Activated CD4-positive, alpha-beta memory T cell treated with anti-CD3 and anti-CD28 coated beads for 36 hours (primary cell): ENCODE measurements at regions of chr4 and their contacts with region 1.

Region 1: DNA sequence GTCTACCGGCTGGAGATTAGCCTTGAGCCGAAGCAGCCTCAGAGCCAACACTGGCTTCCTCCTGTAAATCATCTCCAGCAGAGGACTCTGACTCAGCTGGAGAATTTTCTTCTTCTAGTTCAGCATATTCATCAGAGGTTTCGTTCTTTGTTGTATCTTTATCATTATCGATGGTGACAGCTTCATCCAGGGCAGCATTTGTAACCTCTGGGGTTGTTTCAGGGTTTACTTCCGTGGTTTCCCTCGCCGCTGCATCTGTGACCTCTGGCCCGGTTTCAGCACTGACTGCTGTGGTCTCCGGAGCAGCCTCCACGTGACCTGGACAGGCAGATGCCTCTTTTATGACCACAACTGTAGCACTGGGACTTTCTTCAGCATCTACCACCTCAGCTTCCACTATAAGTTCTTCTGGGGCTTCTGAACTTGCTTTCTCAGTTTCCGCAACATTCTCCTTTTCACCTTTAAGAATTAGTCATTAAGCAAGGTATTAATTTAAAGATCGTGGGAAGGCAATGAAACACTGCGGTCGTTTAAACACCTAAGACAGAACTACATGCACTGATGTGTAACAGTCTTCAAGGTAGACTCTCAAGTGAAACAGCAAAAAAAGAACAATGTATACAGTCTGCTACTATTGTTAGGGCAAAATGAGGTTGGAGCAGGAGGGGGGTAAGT is 13.3 kb downstream of the MGARP start:
- DNase-seq: peak; percentile 94
- H3K4me3 Mint-ChIP-seq: peak overlapping the region; percentile 28
- H3K27ac Mint-ChIP-seq: peak overlapping the region; percentile 84
- H3K4me1 Mint-ChIP-seq: peaks cover 19% of the 10 kb centered on the region
- H3K27me3 Mint-ChIP-seq: peaks cover 1% of the 10 kb centered on the region

Region 2: GRCh38 chr4:139083956-139084803 is 182.5 kb before region 1 on chr4:
- CTCF ChIA-PET with region 1: no interaction called
- POLR2A ChIA-PET with region 1: interaction called, 3 read pairs
- intact Hi-C with region 1: loop called (anchors 1 kb)
- DNase-seq: peak; percentile 90
- H3K4me3 Mint-ChIP-seq: peak overlapping the region; percentile 98
- H3K27ac Mint-ChIP-seq: peak overlapping the region; percentile 99
- H3K4me1 Mint-ChIP-seq: peaks cover 36% of the 10 kb centered on the region
- H3K27me3 Mint-ChIP-seq: no peaks in the 10 kb centered on the region

Region 3: GRCh38 chr4:139243448-139244365 is 23.0 kb before region 1 on chr4:
- CTCF ChIA-PET with region 1: no interaction called
- POLR2A ChIA-PET with region 1: no interaction called
- intact Hi-C with region 1: no loop called
- DNase-seq: no peak
- H3K4me3 Mint-ChIP-seq: no peak overlapping the region
- H3K27ac Mint-ChIP-seq: no peak overlapping the region
- H3K4me1 Mint-ChIP-seq: no peaks in the 10 kb centered on the region
- H3K27me3 Mint-ChIP-seq: no peaks in the 10 kb centered on the region

Region 4: DNA sequence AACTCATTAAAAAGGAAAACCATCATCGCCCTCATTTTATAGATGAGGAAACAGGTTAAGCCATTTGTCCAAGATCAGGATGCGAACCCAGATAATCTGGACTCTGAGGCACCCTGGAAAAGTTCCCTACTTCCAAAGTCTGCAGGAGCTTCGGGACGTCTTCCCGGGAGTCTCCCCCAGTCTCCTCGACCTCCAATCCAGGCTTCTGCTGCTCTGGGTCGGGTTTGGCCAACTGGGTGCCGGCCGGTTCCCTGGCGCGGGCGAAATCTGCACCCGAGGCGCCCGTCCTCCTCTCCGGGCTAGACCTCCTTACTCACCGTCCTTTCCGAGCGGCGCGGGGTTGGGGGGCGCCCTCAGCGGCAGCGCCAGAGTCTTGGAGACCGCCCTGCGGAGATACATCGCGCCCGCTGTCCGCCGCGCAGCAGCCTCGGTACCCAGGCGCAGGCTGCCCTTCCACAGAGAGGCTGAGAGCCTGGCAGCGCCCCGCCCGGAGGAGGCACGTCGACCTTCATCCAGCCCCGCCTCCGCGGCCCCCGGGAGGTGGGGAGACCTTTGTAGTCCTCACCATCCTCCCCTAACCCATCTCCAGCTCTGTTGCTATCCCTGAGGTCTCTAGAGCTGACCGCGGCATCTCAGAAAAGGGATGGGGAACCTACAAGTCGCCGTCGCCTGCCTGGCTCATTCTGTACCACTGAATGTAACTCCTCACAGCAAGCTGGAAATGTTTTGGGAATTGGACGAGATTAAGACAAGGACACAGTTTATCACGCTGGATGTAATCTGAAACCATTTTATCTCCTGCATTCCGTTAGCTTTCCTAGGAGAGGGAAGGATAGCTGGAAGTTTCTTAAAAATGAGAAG is 13.3 kb after region 1 on chr4 and contains the start of gene MGARP:
- CTCF ChIA-PET with region 1: interaction called, 3 read pairs
- POLR2A ChIA-PET with region 1: no interaction called
- intact Hi-C with region 1: loop called (anchors 1 kb)
- DNase-seq: peak; percentile 30
- H3K4me3 Mint-ChIP-seq: peak within 1 kb of the TSS; percentile 60
- H3K27ac Mint-ChIP-seq: no peak within 1 kb of the TSS
- H3K4me1 Mint-ChIP-seq: peaks cover 13% of the 10 kb centered on the region
- H3K27me3 Mint-ChIP-seq: peaks cover 40% of the 10 kb centered on the region
- total RNA-seq, gene MGARP: 0.22 TPM in 1 of 2 experiments, not detected in the other

Region 5: DNA sequence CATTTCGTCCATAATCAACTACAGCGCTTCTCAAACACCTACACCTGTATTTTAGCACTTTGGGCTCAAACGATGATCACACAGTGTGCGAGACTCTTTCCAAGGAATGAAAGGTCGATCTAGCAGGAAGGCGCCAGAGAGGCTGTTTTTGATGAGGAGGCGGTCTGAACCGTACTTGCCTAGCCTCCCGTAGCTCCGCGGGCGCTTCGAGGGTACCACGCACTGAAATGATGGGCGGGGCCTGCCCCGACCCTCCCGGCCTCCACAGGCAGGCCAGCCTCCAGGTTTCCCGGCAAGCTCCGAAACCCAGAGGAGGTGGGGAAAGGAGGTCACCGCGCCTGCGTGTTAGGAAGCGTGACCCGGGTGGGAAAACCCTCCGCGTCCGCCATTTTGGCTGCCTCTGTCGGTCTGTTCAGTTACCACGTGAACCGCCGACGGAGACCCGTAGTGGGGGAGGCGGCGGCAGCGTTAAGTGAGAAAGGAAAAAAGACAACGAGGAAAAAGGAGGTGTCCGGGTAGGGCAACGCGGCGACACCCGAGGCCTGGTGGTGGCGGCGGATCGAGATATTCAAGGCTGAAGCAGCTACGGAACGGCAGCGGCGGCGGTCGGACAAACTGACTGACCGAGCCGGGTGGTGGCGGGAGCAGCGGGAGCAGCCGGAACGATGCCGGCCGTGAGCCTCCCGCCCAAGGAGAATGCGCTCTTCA is 34.5 kb after region 1 on chr4 and contains the start of gene NAA15:
- CTCF ChIA-PET with region 1: interaction called, 39 read pairs
- POLR2A ChIA-PET with region 1: interaction called, 19 read pairs
- intact Hi-C with region 1: loop called (anchors 1 kb)
- DNase-seq: peak; percentile 99
- H3K4me3 Mint-ChIP-seq: peak within 1 kb of the TSS; percentile 100
- H3K27ac Mint-ChIP-seq: peak within 1 kb of the TSS; percentile 100
- H3K4me1 Mint-ChIP-seq: peaks cover 51% of the 10 kb centered on the region
- H3K27me3 Mint-ChIP-seq: no peaks in the 10 kb centered on the region
- total RNA-seq, gene NAA15: 91.2 to 95.8 TPM